BJ (cell line): ENCODE measurements at regions of chr12 and their contacts with region 1.

Region 1: GRCh38 chr12:54368709-54369583 is 4.7 kb upstream of the GPR84 start:
- DNase-seq: peak; percentile 39
- H3K4me3 ChIP-seq: no peak overlapping the region
- H3K27me3 ChIP-seq: no peaks in the 10 kb centered on the region
- CTCF ChIP-seq: peak; percentile 93

Region 2: DNA sequence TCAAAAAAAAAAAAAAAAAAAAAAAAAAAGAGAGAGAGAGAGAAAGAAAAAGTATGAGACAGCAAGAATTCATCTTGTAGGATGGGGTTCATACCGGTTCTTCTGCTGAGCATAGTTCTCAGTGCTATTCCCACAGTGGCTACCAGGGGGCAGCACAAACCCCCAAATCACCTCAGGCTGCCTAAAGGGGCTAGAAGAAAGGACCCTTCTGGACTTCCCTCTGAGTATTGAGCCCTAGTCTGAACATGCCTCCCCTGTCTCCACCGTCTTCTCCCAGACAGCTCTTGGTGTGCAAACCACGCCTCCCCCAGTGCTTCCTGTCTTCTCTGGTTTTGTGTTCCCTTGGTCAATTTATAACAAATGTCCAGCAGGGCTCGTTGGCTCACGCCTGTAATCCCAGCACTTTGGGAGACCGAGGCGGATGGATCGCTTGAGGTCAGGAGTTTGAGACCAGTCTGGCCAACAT is 148.8 kb before region 1 on chr12:
- CTCF ChIA-PET with region 1: interaction called, 17 read pairs
- POLR2A ChIA-PET with region 1: no interaction called
- DNase-seq: peak; percentile 32
- H3K4me3 ChIP-seq: no peak overlapping the region
- H3K27me3 ChIP-seq: no peaks in the 10 kb centered on the region; the same call in 1 of the 2 replicates
- CTCF ChIP-seq: peak; percentile 88

Region 3: DNA sequence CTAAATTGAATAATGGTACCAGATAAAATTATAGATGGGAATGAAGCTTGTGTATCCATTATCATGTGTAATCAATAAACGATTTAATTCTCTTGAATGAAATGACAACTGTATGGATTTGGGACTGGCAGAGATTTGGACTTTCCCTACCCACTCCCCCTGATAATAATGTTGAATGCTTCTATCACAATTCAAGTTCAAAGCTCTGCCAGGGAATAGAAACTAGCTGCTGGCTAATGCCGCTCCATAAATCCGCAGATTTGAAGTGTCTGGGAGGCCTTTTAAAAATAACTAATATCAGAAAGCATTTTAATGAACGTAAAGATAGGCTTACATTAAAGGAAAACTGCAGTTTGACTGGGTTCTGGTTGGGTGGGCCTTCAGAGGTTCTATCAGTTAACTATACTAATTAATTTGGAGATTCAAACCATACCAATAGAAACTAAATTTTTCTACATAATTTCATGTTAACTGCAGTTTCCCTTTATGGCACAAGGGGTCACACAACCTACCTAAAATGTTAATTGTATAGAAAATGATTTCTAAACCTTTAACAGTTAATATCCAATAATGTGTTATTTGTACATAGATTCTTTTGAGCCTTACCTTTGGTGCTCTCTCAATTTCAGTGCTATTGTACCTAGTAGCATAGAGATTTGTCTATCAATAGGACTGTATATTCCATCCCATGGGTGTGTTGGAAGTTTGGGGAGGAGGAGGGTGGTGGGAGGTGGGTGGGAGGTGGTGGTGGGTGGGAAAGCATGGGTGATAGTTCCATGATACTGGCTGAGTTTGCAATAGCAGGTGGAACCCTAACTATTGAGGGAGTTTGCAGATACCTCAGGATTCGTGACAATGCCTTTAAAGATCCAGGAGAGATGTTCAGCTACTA is 83.5 kb before region 1 on chr12:
- CTCF ChIA-PET with region 1: interaction called, 86 read pairs
- POLR2A ChIA-PET with region 1: interaction called, 7 read pairs
- DNase-seq: no peak
- H3K4me3 ChIP-seq: no peak overlapping the region
- H3K27me3 ChIP-seq: no peaks in the 10 kb centered on the region
- CTCF ChIP-seq: peak; percentile 41; the same call in 1 of the 2 replicates

Region 4: GRCh38 chr12:54294152-54294952 is 74.6 kb before region 1 on chr12:
- CTCF ChIA-PET with region 1: interaction called, 86 read pairs
- POLR2A ChIA-PET with region 1: no interaction called
- DNase-seq: no peak
- H3K4me3 ChIP-seq: no peak overlapping the region
- H3K27me3 ChIP-seq: peaks cover 3% of the 10 kb centered on the region; the same call in 1 of the 2 replicates
- CTCF ChIP-seq: peak; percentile 89

Region 5: GRCh38 chr12:54337280-54337842 is 31.6 kb before region 1 on chr12:
- CTCF ChIA-PET with region 1: interaction called, 17 read pairs
- POLR2A ChIA-PET with region 1: interaction called, 12 read pairs
- DNase-seq: no peak
- H3K4me3 ChIP-seq: no peak overlapping the region
- H3K27me3 ChIP-seq: no peaks in the 10 kb centered on the region
- CTCF ChIP-seq: peak; percentile 31; the same call in 1 of the 2 replicates

Region 6: DNA sequence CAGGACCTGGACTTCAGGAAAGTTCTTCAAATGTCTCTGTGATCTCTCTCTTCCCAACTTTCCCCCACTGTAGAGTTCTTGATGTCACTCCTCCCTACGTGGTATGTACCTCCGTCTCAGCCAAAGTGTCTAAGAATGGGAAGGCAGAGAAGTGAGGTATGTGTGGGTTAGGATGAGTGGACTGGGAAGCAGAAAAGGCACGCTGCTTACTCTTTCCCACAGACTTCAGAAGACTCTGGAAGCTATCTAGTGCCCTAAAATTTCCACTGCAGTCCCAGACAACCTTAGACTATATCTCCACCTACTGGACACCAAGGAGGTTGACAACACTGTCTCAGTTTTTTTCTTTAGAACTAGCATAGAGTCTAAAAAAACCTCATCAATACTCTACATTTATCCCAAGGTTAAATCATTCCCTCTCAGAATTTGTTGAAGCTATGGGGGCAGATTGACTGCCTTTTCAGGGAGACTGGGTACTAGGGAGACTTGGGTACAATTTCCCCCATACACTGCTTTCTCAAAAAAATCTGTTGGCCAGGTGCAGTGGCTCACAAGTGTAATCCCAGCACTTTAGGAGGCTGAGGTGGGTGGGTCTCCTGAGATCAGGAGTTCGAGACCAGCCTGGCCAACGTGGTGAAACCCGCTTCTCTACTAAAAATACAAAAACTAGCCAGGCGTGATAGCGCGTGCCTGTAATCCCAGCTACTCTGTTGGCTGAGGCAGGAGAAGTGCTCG is 70.7 kb after region 1 on chr12:
- CTCF ChIA-PET with region 1: interaction called, 24 read pairs
- POLR2A ChIA-PET with region 1: no interaction called
- DNase-seq: peak; percentile 27
- H3K4me3 ChIP-seq: no peak overlapping the region
- H3K27me3 ChIP-seq: peaks cover 4% of the 10 kb centered on the region; the same call in 1 of the 2 replicates
- CTCF ChIP-seq: peak; percentile 79

Region 7: GRCh38 chr12:54661048-54661447 is 292.1 kb after region 1 on chr12:
- CTCF ChIA-PET with region 1: no interaction called
- POLR2A ChIA-PET with region 1: no interaction called
- DNase-seq: no peak
- H3K4me3 ChIP-seq: no peak overlapping the region
- H3K27me3 ChIP-seq: peaks cover 1% of the 10 kb centered on the region; the same call in 1 of the 2 replicates
- CTCF ChIP-seq: no peak